ENCODE measurements at regions of chr1 and their contacts with region 1.

Region 1: GRCh38 chr1:44775078-44775929 is at the start of gene RPS8:
- DNase-seq: peak; percentile 94
- H3K4me3 ChIP-seq: peak within 1 kb of the TSS; percentile 42 to 93 (median 88)
- H3K27ac ChIP-seq: peak within 1 kb of the TSS; percentile 90
- H3K4me1 ChIP-seq: peaks cover 16% of the 10 kb centered on the region
- H3K27me3 ChIP-seq: no peaks in the 10 kb centered on the region
- CTCF ChIP-seq: no peak
- POLR2A ChIP-seq: peak; percentile 99
- total RNA-seq, gene RPS8: 1,842 and 1,896 TPM in 2 replicates

Region 2: GRCh38 chr1:44730741-44731512 is 44.4 kb before region 1 on chr1 and contains the start of gene RNU5D-1:
- CTCF ChIA-PET with region 1: interaction called, 8 read pairs
- POLR2A ChIA-PET with region 1: interaction called, 18 read pairs
- dilution Hi-C with region 1: no loop called
- intact Hi-C with region 1: loop called (anchors 2 kb)
- DNase-seq: peak; percentile 97
- H3K4me3 ChIP-seq: no peak within 1 kb of the TSS
- H3K27ac ChIP-seq: peak within 1 kb of the TSS; percentile 89
- H3K4me1 ChIP-seq: peaks cover 2% of the 10 kb centered on the region
- H3K27me3 ChIP-seq: no peaks in the 10 kb centered on the region
- CTCF ChIP-seq: peak; percentile 77 to 84
- POLR2A ChIP-seq: peak; percentile 100
- total RNA-seq, gene RNU5D-1: not detected in 2 replicates

Region 3: GRCh38 chr1:44739361-44740178 is 35.7 kb before region 1 on chr1 and contains the start of gene KIF2C:
- CTCF ChIA-PET with region 1: no interaction called
- POLR2A ChIA-PET with region 1: no interaction called
- dilution Hi-C with region 1: no loop called
- intact Hi-C with region 1: loop called (anchors 1 kb)
- DNase-seq: peak; percentile 98
- H3K4me3 ChIP-seq: peak within 1 kb of the TSS; percentile 55 to 84 (median 63)
- H3K27ac ChIP-seq: peak within 1 kb of the TSS; percentile 54
- H3K4me1 ChIP-seq: peaks cover 14% of the 10 kb centered on the region
- H3K27me3 ChIP-seq: peaks cover 0 to 4% of the 10 kb centered on the region in 2 experiments
- CTCF ChIP-seq: no peak
- POLR2A ChIP-seq: peak; percentile 98
- total RNA-seq, gene KIF2C: 44.3 and 53.7 TPM in 2 replicates

Region 4: GRCh38 chr1:44799770-44800584 is 24.7 kb after region 1 on chr1 and contains the start of gene PLK3:
- CTCF ChIA-PET with region 1: interaction called, 8 read pairs
- POLR2A ChIA-PET with region 1: interaction called, 15 read pairs
- dilution Hi-C with region 1: no loop called
- intact Hi-C with region 1: loop called (anchors 2 kb)
- DNase-seq: peak; percentile 98
- H3K4me3 ChIP-seq: peak within 1 kb of the TSS; percentile 68 to 75 (median 69)
- H3K27ac ChIP-seq: peak within 1 kb of the TSS; percentile 87
- H3K4me1 ChIP-seq: peaks cover 22% of the 10 kb centered on the region
- H3K27me3 ChIP-seq: no peaks in the 10 kb centered on the region
- CTCF ChIP-seq: peak; percentile 93 to 96
- POLR2A ChIP-seq: peak; percentile 100
- total RNA-seq, gene PLK3: 55.0 and 60.0 TPM in 2 replicates

Region 5: GRCh38 chr1:44807262-44808062 is 32.2 kb after region 1 on chr1 and contains the start of gene DYNLT4:
- CTCF ChIA-PET with region 1: interaction called, 3 read pairs
- POLR2A ChIA-PET with region 1: interaction called, 13 read pairs
- dilution Hi-C with region 1: no loop called
- intact Hi-C with region 1: no loop called
- DNase-seq: peak; percentile 100
- H3K4me3 ChIP-seq: peak within 1 kb of the TSS in 2 of 3 experiments; percentile 6 to 25
- H3K27ac ChIP-seq: peak within 1 kb of the TSS; percentile 100
- H3K4me1 ChIP-seq: peaks cover 72% of the 10 kb centered on the region
- H3K27me3 ChIP-seq: no peaks in the 10 kb centered on the region
- CTCF ChIP-seq: no peak
- POLR2A ChIP-seq: peak; percentile 75
- total RNA-seq, gene DYNLT4: 0.62 and 1.1 TPM in 2 replicates

Region 6: DNA sequence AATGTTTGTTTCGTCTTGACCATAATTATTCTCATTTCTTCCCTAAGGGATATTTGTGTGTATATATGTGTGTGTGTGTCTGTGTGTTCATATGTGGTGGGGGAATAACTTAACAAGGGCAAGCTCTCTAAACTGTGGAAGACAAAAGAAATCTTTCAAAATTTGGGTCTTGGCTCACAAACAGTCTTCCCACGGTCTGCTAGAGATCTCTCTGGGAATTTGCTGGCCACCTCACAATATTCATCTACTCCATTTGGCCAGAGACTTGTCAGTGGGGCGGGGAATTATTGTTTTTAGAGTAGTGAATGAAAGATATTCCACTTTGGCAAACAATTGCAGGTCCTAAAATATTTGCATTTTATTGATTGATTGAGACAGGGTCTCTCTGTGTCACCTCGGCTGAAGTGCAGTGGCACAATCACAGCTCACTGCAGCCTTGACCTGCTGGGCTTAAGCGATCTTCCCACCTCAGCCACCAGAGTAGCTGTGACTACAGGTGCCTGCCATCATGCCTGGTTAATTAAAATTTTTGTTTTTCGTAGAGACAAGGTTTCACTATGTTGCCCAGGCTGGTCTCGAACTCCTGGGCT is 219.1 kb after region 1 on chr1:
- CTCF ChIA-PET with region 1: no interaction called
- POLR2A ChIA-PET with region 1: no interaction called
- dilution Hi-C with region 1: no loop called
- intact Hi-C with region 1: no loop called
- DNase-seq: no peak
- H3K4me3 ChIP-seq: no peak overlapping the region
- H3K27ac ChIP-seq: no peak overlapping the region
- H3K4me1 ChIP-seq: no peaks in the 10 kb centered on the region
- H3K27me3 ChIP-seq: no peaks in the 10 kb centered on the region
- CTCF ChIP-seq: no peak
- POLR2A ChIP-seq: no peak

Region 7: GRCh38 chr1:45037456-45037855 is 262.2 kb after region 1 on chr1:
- CTCF ChIA-PET with region 1: no interaction called
- POLR2A ChIA-PET with region 1: no interaction called
- dilution Hi-C with region 1: no loop called
- intact Hi-C with region 1: no loop called
- DNase-seq: no peak
- H3K4me3 ChIP-seq: no peak overlapping the region
- H3K27ac ChIP-seq: no peak overlapping the region
- H3K4me1 ChIP-seq: no peaks in the 10 kb centered on the region
- H3K27me3 ChIP-seq: no peaks in the 10 kb centered on the region
- CTCF ChIP-seq: no peak
- POLR2A ChIP-seq: no peak

Measured in endothelial cell of umbilical vein (primary cell).